Endothelial cell of umbilical vein (primary cell): ENCODE measurements at regions of chr13 and their contacts with region 1.

Region 1: DNA sequence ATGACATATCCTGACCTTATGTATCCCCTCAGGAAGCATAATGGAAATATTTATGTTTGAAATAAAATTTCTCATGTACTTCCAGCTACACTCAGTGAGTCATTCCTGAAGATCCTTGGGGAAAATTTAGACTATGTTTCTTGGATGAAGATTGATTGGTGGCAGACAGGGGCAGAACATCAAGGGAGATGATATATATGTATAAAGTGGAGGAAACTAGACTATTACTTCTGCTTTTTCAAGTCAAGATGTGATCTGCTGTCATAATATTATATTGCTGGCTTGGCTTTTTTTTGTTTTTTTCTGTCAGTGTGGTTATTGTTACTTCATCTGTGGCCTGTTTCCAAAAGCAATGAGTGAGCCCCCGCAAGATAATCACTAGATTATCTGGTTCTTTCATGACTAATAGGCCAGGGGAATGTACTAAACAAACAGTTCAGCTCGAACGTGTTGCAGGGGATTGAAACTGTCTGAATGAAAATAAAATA is 87.2 kb upstream of the TNFSF11 start:
- DNase-seq: peak; percentile 87
- H3K4me3 ChIP-seq: no peak overlapping the region
- H3K27ac ChIP-seq: peak overlapping the region; percentile 82
- H3K4me1 ChIP-seq: peaks cover 22% of the 10 kb centered on the region
- H3K27me3 ChIP-seq: no peaks in the 10 kb centered on the region
- CTCF ChIP-seq: no peak
- POLR2A ChIP-seq: no peak

Region 2: DNA sequence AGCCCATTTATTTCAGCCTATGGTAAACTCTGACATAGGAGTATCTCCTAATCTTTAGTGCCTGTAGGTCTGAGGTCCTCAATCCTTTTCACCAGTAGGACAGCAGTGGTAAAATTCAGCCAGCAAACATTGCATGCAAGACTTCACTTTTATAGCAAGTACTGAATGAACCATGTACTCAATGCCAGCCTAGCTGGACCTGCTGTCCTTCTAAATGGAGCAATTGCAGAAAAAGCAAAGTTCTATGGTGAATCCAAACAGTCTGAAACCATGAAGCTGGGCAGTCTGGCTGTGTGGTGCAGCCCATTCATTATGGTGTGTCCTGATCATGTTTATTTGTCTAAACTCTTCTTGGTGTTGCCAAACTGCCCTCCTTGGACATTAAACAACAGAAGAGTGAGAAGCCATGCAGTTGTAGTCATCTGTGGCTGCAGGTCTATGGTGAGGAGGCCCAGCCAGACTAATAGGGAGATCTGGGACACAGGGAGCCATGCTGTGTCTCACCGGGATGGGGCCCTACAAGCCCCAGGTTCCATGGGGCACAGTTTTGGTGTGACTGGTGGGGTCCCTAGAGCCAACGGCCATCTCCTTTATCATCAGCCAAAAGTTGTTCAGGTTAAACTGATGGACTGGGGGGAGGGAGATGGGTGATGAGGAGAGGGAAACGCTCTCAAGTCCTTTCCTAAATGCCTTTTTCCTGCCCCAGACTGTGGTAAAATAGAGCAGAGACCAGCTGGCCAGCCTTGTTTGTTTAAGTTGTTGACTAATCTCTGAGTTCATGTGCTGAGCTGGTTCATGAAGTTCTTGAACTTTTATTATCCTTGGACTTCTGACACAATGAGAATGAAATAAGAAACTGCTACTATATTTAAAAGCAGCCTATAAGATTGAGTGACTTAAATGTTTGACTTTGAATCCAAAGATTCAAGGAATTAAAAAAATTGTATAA is 66.6 kb after region 1 on chr13:
- CTCF ChIA-PET with region 1: no interaction called
- POLR2A ChIA-PET with region 1: no interaction called
- dilution Hi-C with region 1: no loop called
- intact Hi-C with region 1: loop called (anchors 2 kb)
- DNase-seq: peak; percentile 83
- H3K4me3 ChIP-seq: no peak overlapping the region
- H3K27ac ChIP-seq: peak overlapping the region; percentile 42
- H3K4me1 ChIP-seq: peaks cover 31% of the 10 kb centered on the region
- H3K27me3 ChIP-seq: no peaks in the 10 kb centered on the region
- CTCF ChIP-seq: no peak
- POLR2A ChIP-seq: no peak